ENCODE measurements at regions of chr1 and their contacts with region 1.

Region 1: DNA sequence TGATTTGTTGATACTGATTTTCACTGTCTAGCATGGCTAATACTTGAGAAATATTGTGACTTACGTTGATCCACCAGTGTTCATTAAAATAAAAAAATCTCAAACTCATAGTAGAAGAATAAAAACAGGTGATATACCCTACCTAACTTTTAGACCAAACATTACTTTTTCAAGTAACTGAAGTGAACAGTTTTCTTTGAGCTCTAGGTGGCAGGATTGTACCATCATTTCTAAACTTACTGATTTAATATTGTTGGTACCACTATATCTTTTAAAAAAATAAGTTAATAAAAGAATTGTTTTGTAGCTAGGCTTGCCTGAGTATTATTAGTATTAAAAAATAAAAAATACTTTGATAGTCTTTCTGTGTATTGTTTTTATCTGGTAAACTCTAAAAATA is 21.5 kb downstream of the CDC73 start:
- DNase-seq: no peak
- ATAC-seq: no peak
- H3K4me3 ChIP-seq: no peak overlapping the region
- H3K27ac ChIP-seq: peak overlapping the region in 1 of 12 donors; percentile 4
- H3K4me1 ChIP-seq: peaks cover 0 to 18% (median 2%) of the 10 kb centered on the region in 12 donors
- H3K27me3 ChIP-seq: no peaks in the 10 kb centered on the region
- CTCF ChIP-seq: peak in 10 of 12 donors; percentile 17 to 51 (median 34)
- POLR2A ChIP-seq: no peak

Region 2: DNA sequence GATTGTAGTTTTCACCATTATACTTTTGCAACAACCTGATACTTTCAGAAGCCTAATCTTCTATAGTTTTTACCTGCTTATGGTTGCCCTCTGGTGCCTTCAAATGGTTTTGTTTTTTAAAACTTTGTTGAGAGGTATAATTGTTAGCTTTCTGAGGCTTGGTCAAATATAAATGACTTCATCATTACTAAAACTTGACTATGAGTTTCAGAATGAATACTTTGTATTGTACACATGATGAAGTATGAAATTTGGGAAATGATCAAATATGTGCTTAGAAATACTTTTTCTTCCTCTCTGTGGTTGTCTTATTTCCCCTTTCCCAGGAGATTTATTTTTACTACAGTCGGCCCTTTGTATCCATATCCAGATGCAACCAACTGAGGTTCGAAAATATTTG is 194.9 kb after region 1 on chr1:
- intact Hi-C with region 1: no loop called
- DNase-seq: no peak
- ATAC-seq: peak in 1 of 4 donors; percentile 49
- H3K4me3 ChIP-seq: no peak overlapping the region
- H3K27ac ChIP-seq: no peak overlapping the region
- H3K4me1 ChIP-seq: peaks cover 0 to 4% (median 0%) of the 10 kb centered on the region in 12 donors
- H3K27me3 ChIP-seq: no peaks in the 10 kb centered on the region
- CTCF ChIP-seq: peak in 1 of 12 donors; percentile 9
- POLR2A ChIP-seq: no peak

Region 3: GRCh38 chr1:193754732-193755427 is 611.6 kb after region 1 on chr1:
- intact Hi-C with region 1: loop called in 1 of 10 experiments (anchors 5 kb)
- DNase-seq: no peak
- ATAC-seq: no peak
- H3K4me3 ChIP-seq: no peak overlapping the region
- H3K27ac ChIP-seq: no peak overlapping the region
- H3K4me1 ChIP-seq: no peaks in the 10 kb centered on the region
- H3K27me3 ChIP-seq: no peaks in the 10 kb centered on the region
- CTCF ChIP-seq: peak in 2 of 12 donors; percentile 9 to 17
- POLR2A ChIP-seq: no peak

Region 4: DNA sequence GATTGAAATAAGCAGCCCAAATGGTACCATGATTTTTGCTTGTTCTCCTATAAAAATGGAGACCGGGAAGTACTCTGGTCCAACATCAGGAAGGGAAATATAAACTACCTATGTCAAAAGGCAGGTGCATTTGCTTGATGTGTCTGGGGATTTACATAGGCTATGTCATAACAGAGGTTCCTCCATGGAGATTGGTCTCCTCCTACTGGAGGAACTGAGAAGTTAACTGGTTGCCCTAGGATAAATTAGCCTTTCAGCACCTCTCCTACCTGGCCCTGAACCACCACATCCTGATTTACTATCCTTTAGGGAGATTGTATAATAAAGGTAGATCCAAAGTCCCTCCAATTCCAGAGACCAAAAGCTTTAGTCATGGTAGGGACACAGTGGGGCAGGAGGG is 1152.4 kb after region 1 on chr1:
- intact Hi-C with region 1: loop called in 1 of 10 experiments (anchors 5 kb)
- DNase-seq: no peak
- ATAC-seq: peak; percentile 71 to 86 (median 80)
- H3K4me3 ChIP-seq: no peak overlapping the region
- H3K27ac ChIP-seq: no peak overlapping the region
- H3K4me1 ChIP-seq: no peaks in the 10 kb centered on the region
- H3K27me3 ChIP-seq: no peaks in the 10 kb centered on the region
- CTCF ChIP-seq: peak; percentile 41 to 63 (median 53)
- POLR2A ChIP-seq: no peak